ENCODE measurements at regions of chr15 and their contacts with region 1.

Region 1: DNA sequence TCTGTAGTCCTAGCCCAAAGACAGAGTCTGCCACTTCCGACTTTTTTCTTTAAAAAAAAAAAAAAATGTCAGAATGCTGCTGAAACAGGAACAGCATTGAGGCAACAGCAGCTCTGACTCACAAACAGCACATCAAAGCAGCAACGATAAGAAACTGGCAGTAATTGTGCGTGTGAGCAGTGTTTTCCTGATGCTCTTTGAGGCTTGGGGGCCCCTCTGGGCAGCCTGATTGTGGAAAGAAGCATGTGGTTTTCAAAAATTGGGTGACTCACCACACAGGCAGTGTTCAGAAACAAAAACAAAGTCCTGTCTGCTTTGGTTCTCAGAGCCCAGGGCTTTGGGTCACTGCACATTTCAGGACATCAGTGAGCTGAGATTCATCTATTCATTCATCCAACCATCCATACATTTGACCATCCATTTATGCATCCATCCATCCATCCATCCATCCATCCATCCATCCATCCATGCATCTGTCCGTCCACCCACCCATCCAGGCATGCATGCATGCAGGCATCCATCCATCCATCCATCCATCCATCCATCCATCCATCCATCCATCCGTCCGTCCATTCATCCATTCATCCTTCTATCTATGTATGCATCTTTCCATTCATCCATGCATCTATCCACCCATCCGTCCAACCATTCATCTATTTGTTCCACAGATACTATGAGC is 308.4 kb downstream of the RPLP1 start:
- DNase-seq: peak; percentile 53 to 96 (median 76)
- ATAC-seq: peak; percentile 71
- H3K4me3 ChIP-seq: no peak overlapping the region
- H3K4me3 Mint-ChIP-seq: peak overlapping the region; percentile 71
- H3K27ac ChIP-seq: peak overlapping the region in 1 of 2 donors; percentile 51
- H3K27ac Mint-ChIP-seq: peak overlapping the region; percentile 80
- H3K4me1 ChIP-seq: peaks cover 64% of the 10 kb centered on the region
- H3K4me1 Mint-ChIP-seq: peaks cover 78% of the 10 kb centered on the region
- H3K27me3 ChIP-seq: no peaks in the 10 kb centered on the region
- H3K27me3 Mint-ChIP-seq: peaks cover 4% of the 10 kb centered on the region
- CTCF ChIP-seq: no peak

Region 2: DNA sequence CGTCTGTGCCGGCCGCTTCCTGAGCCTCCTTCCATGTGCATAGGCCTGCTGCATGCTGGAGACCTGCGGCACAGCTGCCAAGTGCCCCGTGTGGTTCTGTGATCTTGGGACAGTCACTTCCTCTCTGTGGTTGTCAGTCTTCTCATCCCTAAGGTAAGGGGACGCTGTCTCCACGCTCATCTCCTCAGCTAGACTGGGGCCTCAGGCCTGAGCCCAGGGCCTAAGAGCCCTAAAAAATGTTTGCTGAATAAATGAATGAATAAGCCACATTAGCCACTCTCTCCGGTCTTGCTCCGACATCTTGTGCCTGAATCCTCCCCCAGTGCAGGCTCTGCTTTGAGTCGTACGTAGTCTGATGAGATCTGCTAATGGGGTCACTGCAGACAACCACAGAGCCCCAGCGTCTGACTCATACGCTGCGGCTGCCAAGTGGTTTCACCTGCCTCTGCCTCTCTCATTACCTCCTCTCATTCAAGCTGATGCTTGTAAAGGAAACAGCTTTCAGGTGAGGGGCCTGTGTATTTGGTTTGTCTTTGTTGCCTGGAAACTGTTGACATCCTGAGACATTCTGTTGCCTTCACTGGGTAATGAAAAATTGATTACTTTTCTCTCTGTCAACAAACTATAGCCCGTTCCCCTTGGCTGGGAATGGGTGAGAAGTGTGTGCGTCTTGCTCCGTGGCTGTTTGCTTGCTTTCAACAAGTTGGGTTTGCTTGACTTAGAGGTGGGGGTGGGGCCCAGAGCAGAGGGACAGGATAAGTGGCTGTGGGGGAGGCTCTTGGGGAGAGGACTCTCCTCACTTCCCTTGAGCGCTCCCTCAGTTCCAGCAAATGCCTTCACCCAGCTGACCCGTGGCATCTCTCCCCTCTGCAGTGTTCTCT is 292.5 kb before region 1 on chr15:
- CTCF ChIA-PET with region 1: no interaction called
- POLR2A ChIA-PET with region 1: no interaction called
- intact Hi-C with region 1: loop called (anchors 1 to 10 kb)
- DNase-seq: peak; percentile 74 to 97 (median 81)
- ATAC-seq: peak; percentile 88
- H3K4me3 ChIP-seq: peak overlapping the region; percentile 15
- H3K4me3 Mint-ChIP-seq: peak overlapping the region; percentile 70
- H3K27ac ChIP-seq: peak overlapping the region; percentile 91
- H3K27ac Mint-ChIP-seq: peak overlapping the region; percentile 90
- H3K4me1 ChIP-seq: peaks cover 39% of the 10 kb centered on the region
- H3K4me1 Mint-ChIP-seq: peaks cover 29% of the 10 kb centered on the region
- H3K27me3 ChIP-seq: no peaks in the 10 kb centered on the region
- H3K27me3 Mint-ChIP-seq: no peaks in the 10 kb centered on the region
- CTCF ChIP-seq: no peak

Region 3: DNA sequence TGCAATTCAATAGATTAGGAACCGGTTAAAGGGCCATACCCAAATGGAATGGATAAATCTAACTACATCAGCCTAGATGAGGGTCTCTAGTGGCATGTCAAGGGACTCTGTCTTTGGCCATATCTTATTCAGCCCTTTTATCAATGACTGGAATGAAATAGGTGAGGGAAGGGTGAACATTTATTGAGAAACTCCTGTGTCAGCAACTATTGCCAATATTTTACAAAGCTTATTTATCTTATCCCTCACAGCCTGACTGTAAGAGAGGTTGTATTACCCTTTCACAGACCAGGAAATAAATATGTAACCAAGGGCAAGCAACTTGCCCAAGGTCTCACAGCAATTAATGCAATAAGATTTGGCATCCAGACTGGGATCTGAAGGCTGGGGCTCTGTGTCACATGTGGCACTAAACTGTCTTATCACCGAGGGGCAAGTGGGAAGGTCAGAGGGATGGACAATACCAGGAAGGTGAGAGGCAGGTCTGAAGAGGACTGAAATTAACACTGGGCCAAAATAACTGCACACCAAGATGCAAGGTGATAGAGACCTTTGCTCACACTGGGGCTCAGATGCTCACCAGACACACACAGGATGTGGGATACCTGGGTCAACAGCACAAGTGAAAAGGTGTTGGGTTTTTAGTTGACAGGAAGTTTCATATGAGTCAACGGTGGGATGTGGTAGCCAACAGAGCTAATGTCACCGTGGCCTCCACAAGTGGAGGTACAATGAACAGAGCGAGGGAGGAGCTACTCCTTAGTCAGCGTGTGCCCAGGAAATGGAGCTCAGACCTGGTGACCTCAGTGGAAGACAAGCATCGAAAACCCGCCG is 47.1 kb before region 1 on chr15:
- CTCF ChIA-PET with region 1: interaction called, 5 read pairs
- POLR2A ChIA-PET with region 1: interaction called, 69 read pairs
- intact Hi-C with region 1: loop called (anchors 1 to 10 kb)
- DNase-seq: peak; percentile 40 to 95 (median 66)
- ATAC-seq: peak; percentile 93
- H3K4me3 ChIP-seq: peak overlapping the region; percentile 12
- H3K4me3 Mint-ChIP-seq: peak overlapping the region; percentile 32
- H3K27ac ChIP-seq: peak overlapping the region; percentile 32 to 44
- H3K27ac Mint-ChIP-seq: peak overlapping the region; percentile 78
- H3K4me1 ChIP-seq: peaks cover 46% of the 10 kb centered on the region
- H3K4me1 Mint-ChIP-seq: peaks cover 49% of the 10 kb centered on the region
- H3K27me3 ChIP-seq: no peaks in the 10 kb centered on the region
- H3K27me3 Mint-ChIP-seq: no peaks in the 10 kb centered on the region
- CTCF ChIP-seq: no peak

Region 4: GRCh38 chr15:69719527-69720240 is 41.3 kb before region 1 on chr15:
- CTCF ChIA-PET with region 1: interaction called, 6 read pairs
- POLR2A ChIA-PET with region 1: interaction called, 69 read pairs
- intact Hi-C with region 1: loop called (anchors 1 to 10 kb)
- DNase-seq: peak; percentile 22 to 91 (median 56)
- ATAC-seq: peak; percentile 81
- H3K4me3 ChIP-seq: no peak overlapping the region
- H3K4me3 Mint-ChIP-seq: peak overlapping the region; percentile 52
- H3K27ac ChIP-seq: peak overlapping the region in 1 of 2 donors; percentile 4
- H3K27ac Mint-ChIP-seq: peak overlapping the region; percentile 84
- H3K4me1 ChIP-seq: peaks cover 70% of the 10 kb centered on the region
- H3K4me1 Mint-ChIP-seq: peaks cover 76% of the 10 kb centered on the region
- H3K27me3 ChIP-seq: no peaks in the 10 kb centered on the region
- H3K27me3 Mint-ChIP-seq: no peaks in the 10 kb centered on the region
- CTCF ChIP-seq: no peak